WTC11 (cell line): ENCODE measurements at regions of chr13 and their contacts with region 1.

Region 1: GRCh38 chr13:113211774-113212173 is 2.4 kb downstream of the CUL4A start:
- DNase-seq: peak; percentile 56
- ATAC-seq: peak; percentile 31
- H3K4me3 Mint-ChIP-seq: peak overlapping the region; percentile 78
- H3K27ac Mint-ChIP-seq: peak overlapping the region; percentile 75
- H3K4me1 Mint-ChIP-seq: peaks cover 36% of the 10 kb centered on the region
- H3K27me3 Mint-ChIP-seq: no peaks in the 10 kb centered on the region
- CTCF ChIP-seq: no peak

Region 2: DNA sequence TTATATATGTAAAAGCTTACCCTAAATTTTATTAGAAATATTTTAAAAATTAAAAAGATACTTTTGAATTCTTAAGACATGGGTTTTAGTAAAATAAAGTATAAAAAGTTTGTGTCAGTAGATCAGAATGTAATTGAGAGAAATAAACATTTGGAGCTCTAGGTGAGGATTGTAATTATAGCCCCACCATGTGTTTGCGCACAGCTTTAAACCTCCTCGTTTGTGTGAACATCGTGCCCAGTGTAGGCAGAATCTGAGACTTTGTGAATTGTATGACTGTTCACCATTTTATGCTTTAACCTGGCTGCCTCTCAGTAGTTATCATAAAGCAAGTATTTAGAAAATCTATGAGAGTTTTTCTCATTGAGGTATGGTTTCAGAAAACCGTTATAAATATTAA is 26.8 kb after region 1 on chr13:
- CTCF ChIA-PET with region 1: interaction called, 14 read pairs
- POLR2A ChIA-PET with region 1: no interaction called
- DNase-seq: no peak
- ATAC-seq: no peak; the same call in 1 of the 2 replicates
- H3K4me3 Mint-ChIP-seq: no peak overlapping the region
- H3K27ac Mint-ChIP-seq: no peak overlapping the region
- H3K4me1 Mint-ChIP-seq: peaks cover 1% of the 10 kb centered on the region
- H3K27me3 Mint-ChIP-seq: no peaks in the 10 kb centered on the region
- CTCF ChIP-seq: peak; percentile 30; the same call in 1 of the 2 replicates

Region 3: DNA sequence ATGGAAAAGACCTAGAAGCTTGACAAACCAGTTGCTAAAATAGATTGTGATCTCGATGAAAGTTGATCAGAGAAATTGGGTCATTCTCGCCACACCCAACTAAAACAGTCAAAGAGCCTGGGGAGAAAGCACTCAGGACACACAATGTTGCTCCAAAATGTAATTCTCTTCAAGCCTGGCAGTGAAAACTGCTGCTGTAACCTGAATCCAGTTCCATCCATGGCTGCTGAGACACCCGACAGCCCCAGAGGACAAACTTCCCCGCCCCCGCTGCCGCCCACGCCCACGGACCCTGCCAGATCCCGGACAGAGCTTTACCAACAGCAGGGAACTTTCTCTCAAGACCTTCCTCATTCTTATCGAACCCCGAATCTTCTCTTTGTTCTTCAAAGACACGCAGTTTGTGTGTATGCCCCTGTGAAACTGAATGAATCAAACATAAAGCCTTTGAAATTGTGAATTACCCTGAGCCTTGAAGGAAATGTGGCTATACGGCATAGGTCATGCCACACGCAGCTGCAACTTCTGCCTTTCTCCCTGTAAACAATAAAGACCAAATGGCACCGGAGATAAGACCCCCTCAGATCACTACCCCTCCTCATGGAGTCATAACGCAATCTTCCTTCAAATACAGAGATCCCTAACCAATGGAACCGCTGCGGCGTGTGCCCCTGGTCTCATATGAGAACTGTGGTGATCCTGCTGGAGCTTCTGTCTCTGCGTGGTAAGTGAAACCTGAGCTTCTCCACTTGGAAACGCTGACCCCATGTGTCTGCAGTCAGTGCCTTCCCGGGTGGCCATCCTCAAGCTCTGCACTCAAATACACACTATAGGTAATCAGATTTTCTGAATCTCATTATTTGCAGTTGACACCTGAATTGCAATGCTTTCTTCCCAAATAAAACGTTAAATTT is 80.4 kb after region 1 on chr13:
- CTCF ChIA-PET with region 1: no interaction called
- POLR2A ChIA-PET with region 1: no interaction called
- DNase-seq: no peak
- ATAC-seq: peak; percentile 53
- H3K4me3 Mint-ChIP-seq: peak overlapping the region; percentile 23
- H3K27ac Mint-ChIP-seq: no peak overlapping the region
- H3K4me1 Mint-ChIP-seq: peaks cover 19% of the 10 kb centered on the region
- H3K27me3 Mint-ChIP-seq: peaks cover 67% of the 10 kb centered on the region
- CTCF ChIP-seq: no peak